Activated naive CD4-positive, alpha-beta T cell treated with anti-CD3 and anti-CD28 coated beads for 36 hours (primary cell): ENCODE measurements at regions of chr19 and their contacts with region 1.

Region 1: GRCh38 chr19:20039203-20039723 is at the start of gene ZNF682:
- DNase-seq: peak; percentile 98
- H3K4me3 Mint-ChIP-seq: peak within 1 kb of the TSS; percentile 94
- H3K27ac Mint-ChIP-seq: peak within 1 kb of the TSS; percentile 90
- H3K4me1 Mint-ChIP-seq: peaks cover 15% of the 10 kb centered on the region
- H3K27me3 Mint-ChIP-seq: no peaks in the 10 kb centered on the region
- total RNA-seq, gene ZNF682: 8.1 to 8.9 TPM

Region 2: DNA sequence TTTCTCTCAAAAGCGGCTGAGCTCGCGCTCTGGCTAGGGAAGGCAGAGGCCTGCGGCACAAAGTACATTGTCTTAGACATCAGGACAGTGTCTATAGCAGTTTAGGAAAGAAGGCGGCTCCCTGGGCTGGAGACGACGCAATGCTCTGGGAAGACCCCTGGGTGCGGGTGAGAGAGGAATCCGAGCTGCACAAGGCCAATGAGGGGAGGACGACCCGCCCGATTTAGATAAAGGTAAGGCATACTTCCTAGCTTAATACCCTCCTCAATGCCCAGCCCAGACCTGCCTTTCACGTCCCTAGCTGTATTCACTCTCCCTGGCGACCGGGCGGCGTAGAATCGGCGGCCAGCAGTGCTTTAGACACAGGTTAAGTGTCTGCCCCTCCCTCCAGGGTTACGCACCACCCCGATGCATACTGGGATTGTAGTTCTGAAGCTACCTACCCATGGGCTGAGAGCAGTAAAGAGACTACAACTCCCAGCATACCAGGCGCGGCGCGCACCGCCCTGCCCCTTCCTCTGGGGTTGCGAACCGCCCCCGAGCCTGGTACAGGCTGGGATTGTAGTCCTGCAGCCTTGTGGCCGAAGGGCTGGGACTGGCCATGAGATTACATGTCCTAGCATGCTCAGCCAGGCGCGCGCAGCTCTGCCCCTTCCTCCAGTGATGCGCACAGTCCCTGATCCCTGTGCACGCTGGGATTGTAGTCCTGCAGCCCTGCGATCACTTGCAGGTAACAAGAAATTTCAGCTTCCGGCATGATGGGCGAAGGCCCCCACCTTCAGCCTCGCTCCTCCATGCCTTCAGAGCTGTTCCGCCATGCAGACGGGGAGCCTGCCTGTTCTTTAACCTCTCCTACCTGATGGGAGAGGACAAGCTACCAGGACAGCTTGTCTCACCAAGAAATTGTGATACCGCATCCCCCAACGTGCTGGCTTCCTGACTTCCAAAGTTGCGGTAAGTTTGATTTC is 262.9 kb before region 1 on chr19:
- CTCF ChIA-PET with region 1: no interaction called
- intact Hi-C with region 1: loop called (anchors 2 kb)
- DNase-seq: peak; percentile 95
- H3K4me3 Mint-ChIP-seq: peak overlapping the region; percentile 90
- H3K27ac Mint-ChIP-seq: peak overlapping the region; percentile 90
- H3K4me1 Mint-ChIP-seq: peaks cover 44% of the 10 kb centered on the region
- H3K27me3 Mint-ChIP-seq: no peaks in the 10 kb centered on the region

Region 3: DNA sequence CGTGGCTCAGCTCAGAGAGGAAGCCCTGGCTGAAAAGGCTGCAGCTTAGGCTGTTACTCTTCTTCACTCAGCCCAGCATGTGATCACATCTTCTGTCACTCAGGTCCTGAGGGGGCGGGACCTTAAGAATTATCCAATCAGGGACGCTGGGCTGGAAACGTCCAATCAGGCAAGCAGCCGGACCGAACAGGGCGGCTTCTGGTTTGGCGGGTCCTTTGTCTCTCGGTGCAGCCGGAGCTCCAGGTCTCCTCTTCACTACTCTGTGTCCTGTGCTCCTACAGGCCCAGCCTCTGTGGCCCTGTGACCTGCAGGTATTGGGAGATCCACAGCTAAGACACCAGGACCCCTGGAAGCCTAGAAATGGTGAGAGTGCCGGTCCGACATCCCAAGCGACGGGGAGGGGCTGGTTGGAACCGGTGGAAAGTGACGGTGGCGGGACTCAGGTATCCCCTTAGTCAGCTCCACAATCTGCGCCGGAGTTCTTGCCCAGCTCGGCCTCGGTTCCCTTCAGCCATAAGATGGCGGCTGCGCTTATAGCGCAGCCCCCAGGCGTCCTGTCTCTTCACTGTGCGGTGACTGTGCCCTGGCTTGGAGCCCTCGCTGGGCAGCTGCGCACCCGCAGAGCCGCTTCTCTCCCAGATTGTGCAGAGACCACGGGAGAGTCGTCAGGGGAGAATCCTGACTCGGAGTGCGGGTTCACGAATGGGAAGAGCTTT is 138.4 kb before region 1 on chr19 and contains the start of gene ZNF93:
- CTCF ChIA-PET with region 1: no interaction called
- intact Hi-C with region 1: loop called (anchors 1 kb)
- DNase-seq: peak; percentile 98
- H3K4me3 Mint-ChIP-seq: peak within 1 kb of the TSS; percentile 97
- H3K27ac Mint-ChIP-seq: peak within 1 kb of the TSS; percentile 95
- H3K4me1 Mint-ChIP-seq: peaks cover 28% of the 10 kb centered on the region
- H3K27me3 Mint-ChIP-seq: no peaks in the 10 kb centered on the region
- total RNA-seq, gene ZNF93: 15.2 to 16.6 TPM

Region 4: DNA sequence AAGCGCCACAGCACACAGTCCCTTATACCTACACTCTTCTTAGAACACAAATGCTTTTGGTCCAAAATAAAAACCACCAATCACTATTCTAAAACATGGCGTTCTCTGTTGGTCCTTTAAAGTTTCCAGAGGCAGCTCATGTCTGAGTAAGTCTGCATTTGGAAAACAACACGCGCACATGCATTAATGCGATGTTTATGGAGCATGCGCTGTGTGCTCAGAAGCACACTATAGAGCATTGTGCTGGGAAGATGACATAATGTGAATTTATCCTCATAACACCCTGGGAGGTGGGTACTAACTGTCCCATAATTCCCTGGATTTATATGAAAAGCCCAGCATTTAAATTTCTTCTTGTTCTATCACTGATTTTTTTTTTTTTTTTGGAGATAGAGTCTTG is 10.7 kb before region 1 on chr19:
- CTCF ChIA-PET with region 1: no interaction called
- intact Hi-C with region 1: no loop called
- DNase-seq: no peak
- H3K4me3 Mint-ChIP-seq: no peak overlapping the region
- H3K27ac Mint-ChIP-seq: no peak overlapping the region
- H3K4me1 Mint-ChIP-seq: no peaks in the 10 kb centered on the region
- H3K27me3 Mint-ChIP-seq: no peaks in the 10 kb centered on the region

Region 5: DNA sequence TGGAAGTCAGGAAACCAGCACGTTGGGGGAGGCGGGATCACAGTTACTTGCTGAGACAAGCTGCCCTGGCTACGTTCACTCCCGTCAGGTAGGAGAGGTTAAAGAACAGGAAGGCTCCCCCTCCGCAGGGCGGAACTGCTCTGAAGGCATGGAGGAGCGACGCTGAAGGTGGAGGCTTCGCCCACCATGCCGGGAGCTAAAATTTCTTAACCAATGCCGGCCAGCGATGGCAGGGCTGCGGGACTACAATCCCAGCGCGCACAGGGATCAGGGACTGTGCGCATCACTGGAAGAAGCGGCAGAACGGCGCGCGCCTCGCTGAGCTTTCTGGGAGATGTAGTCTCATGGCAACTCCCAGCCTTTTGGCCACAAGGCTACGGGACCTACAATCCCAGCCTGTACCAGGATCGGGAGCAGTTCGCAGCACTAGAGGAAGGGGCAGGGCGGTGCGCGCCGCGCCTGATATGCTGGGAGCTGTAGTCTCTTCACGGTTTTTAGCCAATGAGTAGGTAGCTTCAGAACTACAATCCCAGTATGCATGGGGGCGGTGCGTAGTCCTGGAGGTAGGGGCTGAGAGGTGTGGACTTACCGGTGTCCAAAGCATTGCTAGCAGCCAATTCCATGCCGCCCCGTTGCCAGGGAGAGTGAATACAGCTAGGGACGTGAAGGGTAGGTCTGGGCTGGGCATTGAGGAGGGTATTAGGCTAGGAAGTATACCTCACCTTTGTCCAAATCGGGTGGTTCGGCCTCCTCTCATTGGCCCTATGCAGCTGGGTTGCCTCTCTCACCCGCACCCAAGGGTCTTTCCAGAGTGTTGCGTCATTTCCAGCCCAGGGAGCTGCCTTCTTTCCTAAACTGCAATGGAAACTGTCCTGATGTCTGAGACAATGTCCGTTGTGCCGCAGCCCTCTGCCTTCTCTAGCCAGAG is 12.8 kb after region 1 on chr19:
- CTCF ChIA-PET with region 1: interaction called, 6 read pairs
- intact Hi-C with region 1: loop called (anchors 1 kb)
- DNase-seq: peak; percentile 87
- H3K4me3 Mint-ChIP-seq: peak overlapping the region; percentile 95
- H3K27ac Mint-ChIP-seq: peak overlapping the region; percentile 86
- H3K4me1 Mint-ChIP-seq: peaks cover 6% of the 10 kb centered on the region
- H3K27me3 Mint-ChIP-seq: no peaks in the 10 kb centered on the region

Region 6: GRCh38 chr19:20077791-20078463 is 38.7 kb after region 1 on chr19 and contains the start of gene ZNF90:
- CTCF ChIA-PET with region 1: no interaction called
- intact Hi-C with region 1: loop called (anchors 1 kb)
- DNase-seq: peak; percentile 98
- H3K4me3 Mint-ChIP-seq: peak within 1 kb of the TSS; percentile 97
- H3K27ac Mint-ChIP-seq: peak within 1 kb of the TSS; percentile 63
- H3K4me1 Mint-ChIP-seq: peaks cover 9% of the 10 kb centered on the region
- H3K27me3 Mint-ChIP-seq: no peaks in the 10 kb centered on the region
- total RNA-seq, gene ZNF90: 15.5 to 17.6 TPM

Region 7: DNA sequence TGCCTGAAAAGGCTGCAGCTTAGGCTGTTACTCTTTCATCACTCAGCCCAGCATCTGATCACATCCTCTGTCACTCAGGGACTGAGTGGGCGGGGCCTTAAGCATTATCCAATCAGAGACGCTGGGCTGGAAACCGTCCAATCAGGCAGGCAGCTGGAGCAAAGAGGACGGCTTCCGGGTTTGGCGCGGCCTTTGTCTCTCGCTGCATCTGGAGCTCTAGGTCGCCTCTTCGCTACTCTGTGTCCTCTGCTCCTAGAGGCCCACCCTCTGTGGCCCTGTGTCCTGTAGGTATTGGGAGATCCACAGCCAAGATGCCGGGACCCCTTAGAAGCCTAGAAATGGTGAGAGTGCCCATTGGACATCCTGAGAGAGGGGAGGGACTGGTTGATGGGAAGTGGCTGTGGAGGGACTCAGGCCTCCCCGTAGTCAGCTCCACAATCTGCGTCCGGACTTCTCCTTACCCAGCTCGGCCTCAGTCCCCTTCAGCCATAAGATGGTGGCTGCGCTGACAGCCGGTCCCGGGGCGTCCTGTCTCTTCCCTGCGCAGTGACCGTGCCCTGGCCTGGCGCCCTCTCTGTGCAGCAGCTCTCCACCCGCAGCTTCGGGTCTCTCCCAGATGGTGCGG is 127.9 kb after region 1 on chr19 and contains the start of gene ZNF486:
- CTCF ChIA-PET with region 1: no interaction called
- intact Hi-C with region 1: loop called (anchors 1 kb)
- DNase-seq: peak; percentile 98
- H3K4me3 Mint-ChIP-seq: peak within 1 kb of the TSS; percentile 98
- H3K27ac Mint-ChIP-seq: peak within 1 kb of the TSS; percentile 91
- H3K4me1 Mint-ChIP-seq: peaks cover 19% of the 10 kb centered on the region
- H3K27me3 Mint-ChIP-seq: no peaks in the 10 kb centered on the region
- total RNA-seq, gene ZNF486: 11.3 to 13.2 TPM